Activated B cell treated with CpG ODN at 0.5 μM for 24 hours (primary cell): ENCODE measurements at regions of chr17 and their contacts with region 1.

Region 1: DNA sequence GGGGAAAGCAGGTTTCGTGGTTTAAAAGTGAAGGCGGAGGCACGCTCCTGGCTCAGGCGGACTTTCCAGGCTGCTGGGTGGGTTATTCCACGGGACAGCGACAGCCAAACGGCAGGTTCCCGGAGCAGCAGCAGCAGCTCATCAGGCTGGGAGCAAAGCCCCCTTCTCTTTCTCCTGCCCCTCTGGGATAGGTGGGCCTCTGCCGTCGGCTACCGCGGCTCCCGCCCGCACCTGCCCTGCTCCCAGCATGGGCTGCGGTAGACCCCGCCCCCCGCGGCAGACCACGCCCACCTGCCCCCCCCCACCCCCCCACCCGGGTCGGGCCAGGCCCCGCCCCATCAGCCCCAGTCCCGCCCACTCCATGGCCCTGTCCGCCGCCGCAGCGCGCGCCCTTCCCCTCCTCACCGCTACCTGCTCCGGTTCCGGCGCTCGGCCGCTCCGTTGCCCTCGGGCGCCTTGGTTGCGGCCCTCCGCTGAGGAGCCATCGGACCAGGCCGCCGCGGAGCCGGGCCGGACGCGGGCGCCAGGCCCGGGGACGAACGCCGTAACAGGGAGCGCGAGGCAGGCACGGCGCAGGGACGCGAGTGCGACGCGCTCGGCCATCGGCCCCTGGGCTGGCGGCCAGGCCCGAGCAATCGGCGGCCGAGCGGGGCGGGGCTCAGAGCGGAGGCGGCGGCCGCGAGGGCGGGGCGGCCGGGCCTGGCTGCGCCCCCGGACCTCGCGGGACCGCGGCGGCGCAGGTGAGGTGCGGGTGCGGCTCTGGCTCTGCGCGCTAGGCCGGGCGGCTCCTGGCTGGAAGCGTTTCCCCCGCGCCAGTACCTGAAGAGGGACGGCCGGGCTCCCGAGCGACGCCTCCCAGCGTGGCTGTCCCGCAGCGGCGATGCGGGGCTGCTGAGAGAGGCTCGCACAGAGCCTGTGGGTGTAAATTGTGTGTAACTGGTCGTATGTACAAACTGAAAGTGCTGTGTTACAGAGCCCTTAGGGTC is at the starts of genes HEXD and OGFOD3:
- DNase-seq: peak; percentile 95
- ATAC-seq: peak; percentile 87
- H3K4me3 Mint-ChIP-seq: peak within 1 kb of the TSS; percentile 83
- H3K27ac Mint-ChIP-seq: peak within 1 kb of the TSS; percentile 69
- H3K4me1 Mint-ChIP-seq: peaks cover 29% of the 10 kb centered on the region
- H3K27me3 Mint-ChIP-seq: no peaks in the 10 kb centered on the region
- CTCF ChIP-seq: no peak
- total RNA-seq, gene HEXD: 69.5 and 88.8 TPM in 2 replicates
- total RNA-seq, gene OGFOD3: 29.5 and 35.0 TPM in 2 replicates

Region 2: DNA sequence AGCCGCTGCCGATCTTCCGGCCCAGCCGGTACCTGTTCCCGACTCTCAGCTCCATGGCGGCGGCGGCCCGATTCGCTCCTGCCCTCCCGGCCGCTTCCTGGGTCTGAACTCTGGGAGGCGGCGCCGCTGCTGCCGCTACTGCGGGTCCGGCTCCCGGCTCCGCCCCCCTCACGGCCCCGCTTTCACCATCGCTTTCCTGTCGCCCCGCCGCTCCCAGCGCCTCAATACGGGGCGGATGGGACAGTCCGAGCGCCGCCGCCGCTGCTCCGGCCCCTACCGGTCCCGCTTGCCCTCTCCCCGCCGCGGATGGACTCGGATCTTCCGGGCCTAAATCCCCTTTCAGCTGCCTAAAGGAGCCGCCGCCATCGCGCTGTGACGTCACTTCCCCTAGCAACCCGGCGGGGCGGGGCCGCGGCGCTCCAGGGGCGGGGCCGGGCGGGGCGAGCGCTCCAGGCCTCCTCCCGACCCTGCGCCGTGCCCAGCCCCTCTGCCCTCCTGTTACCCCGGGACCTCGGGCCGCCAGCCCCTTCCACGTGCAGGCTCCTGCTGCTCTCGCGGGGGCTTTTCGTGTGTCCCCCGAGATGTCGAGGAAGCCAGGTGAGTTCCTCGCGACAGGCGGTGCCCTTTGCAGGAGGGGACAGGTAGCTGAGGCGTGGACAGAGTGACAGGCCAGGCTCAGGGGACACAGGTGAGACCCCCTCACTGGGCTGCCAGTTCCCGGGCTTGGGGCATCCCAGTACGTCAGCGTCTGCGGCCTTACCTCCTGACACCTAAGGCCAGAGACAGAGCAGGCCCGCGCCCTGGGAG is 144.8 kb before region 1 on chr17 and contains the start of gene CSNK1D:
- CTCF ChIA-PET with region 1: no interaction called
- POLR2A ChIA-PET with region 1: interaction called, 4 read pairs
- intact Hi-C with region 1: loop called (anchors 1 kb)
- DNase-seq: peak; percentile 97
- ATAC-seq: peak; percentile 83
- H3K4me3 Mint-ChIP-seq: peak within 1 kb of the TSS; percentile 94
- H3K27ac Mint-ChIP-seq: peak within 1 kb of the TSS; percentile 97
- H3K4me1 Mint-ChIP-seq: peaks cover 45% of the 10 kb centered on the region
- H3K27me3 Mint-ChIP-seq: no peaks in the 10 kb centered on the region
- CTCF ChIP-seq: no peak
- total RNA-seq, gene CSNK1D: 147 and 170 TPM in 2 replicates

Region 3: GRCh38 chr17:82351716-82352488 is 66.4 kb before region 1 on chr17:
- CTCF ChIA-PET with region 1: interaction called, 3 read pairs
- POLR2A ChIA-PET with region 1: interaction called, 3 read pairs
- intact Hi-C with region 1: loop called (anchors 1 kb)
- DNase-seq: peak; percentile 67
- ATAC-seq: peak; percentile 91
- H3K4me3 Mint-ChIP-seq: no peak overlapping the region
- H3K27ac Mint-ChIP-seq: no peak overlapping the region
- H3K4me1 Mint-ChIP-seq: peaks cover 9% of the 10 kb centered on the region
- H3K27me3 Mint-ChIP-seq: peaks cover 13% of the 10 kb centered on the region
- CTCF ChIP-seq: peak; percentile 70

Region 4: DNA sequence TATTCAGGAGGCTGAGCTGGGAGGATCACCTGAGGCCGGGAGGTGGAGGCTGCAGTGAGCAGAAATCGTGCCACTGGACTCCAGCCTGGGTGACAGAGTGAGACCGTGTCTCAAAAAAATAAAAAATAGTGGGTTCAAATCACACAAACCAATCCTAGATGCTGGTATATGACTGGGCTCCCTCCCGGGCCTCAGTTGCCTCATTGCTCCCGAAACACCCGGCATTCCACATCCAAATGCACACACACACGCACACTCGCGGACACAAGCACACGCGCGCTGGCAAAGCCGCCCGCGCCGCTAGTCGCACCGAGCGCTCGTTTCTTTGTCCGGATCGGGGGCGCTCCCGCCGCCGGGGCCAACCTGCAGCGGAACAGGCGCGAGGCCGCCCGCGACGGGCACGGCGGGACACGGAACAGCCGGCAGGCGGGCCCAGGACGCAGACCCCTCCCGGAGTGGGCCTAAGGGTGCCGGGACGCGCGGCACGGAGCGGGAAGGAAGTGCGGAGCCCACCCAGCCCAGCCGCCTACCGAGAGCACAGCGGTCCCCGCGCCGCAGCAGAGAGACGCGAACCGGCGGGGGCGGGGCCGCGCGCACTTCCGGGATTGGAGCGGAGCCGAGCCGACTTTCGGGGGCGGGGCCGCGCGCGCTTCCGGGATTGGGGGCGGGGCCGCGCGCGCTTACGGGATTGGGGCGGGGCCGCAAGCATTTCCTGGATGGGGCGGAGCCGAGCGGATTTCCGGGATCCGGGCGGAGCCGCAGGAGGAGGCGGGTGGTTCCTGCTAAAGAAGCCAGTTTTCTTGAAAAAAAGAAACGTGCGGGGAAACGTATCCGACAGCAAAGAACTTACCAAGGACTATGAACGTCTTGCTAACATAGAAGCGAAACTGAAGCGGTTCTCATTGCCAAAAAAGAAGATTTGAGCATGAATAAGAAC is 32.1 kb after region 1 on chr17 and contains the start of gene CYBC1:
- CTCF ChIA-PET with region 1: interaction called, 4 read pairs
- POLR2A ChIA-PET with region 1: interaction called, 62 read pairs
- intact Hi-C with region 1: loop called (anchors 1 kb)
- DNase-seq: peak; percentile 96
- ATAC-seq: peak; percentile 42
- H3K4me3 Mint-ChIP-seq: peak within 1 kb of the TSS; percentile 94
- H3K27ac Mint-ChIP-seq: peak within 1 kb of the TSS; percentile 97
- H3K4me1 Mint-ChIP-seq: peaks cover 42% of the 10 kb centered on the region
- H3K27me3 Mint-ChIP-seq: no peaks in the 10 kb centered on the region
- CTCF ChIP-seq: no peak
- total RNA-seq, gene CYBC1: 405 and 501 TPM in 2 replicates

Region 5: GRCh38 chr17:82494236-82495055 is 76.2 kb after region 1 on chr17:
- CTCF ChIA-PET with region 1: no interaction called
- POLR2A ChIA-PET with region 1: no interaction called
- intact Hi-C with region 1: loop called (anchors 1 kb)
- DNase-seq: peak; percentile 88
- ATAC-seq: peak; percentile 78
- H3K4me3 Mint-ChIP-seq: peak overlapping the region; percentile 75
- H3K27ac Mint-ChIP-seq: peak overlapping the region; percentile 93
- H3K4me1 Mint-ChIP-seq: peaks cover 26% of the 10 kb centered on the region
- H3K27me3 Mint-ChIP-seq: no peaks in the 10 kb centered on the region
- CTCF ChIP-seq: no peak

Region 6: DNA sequence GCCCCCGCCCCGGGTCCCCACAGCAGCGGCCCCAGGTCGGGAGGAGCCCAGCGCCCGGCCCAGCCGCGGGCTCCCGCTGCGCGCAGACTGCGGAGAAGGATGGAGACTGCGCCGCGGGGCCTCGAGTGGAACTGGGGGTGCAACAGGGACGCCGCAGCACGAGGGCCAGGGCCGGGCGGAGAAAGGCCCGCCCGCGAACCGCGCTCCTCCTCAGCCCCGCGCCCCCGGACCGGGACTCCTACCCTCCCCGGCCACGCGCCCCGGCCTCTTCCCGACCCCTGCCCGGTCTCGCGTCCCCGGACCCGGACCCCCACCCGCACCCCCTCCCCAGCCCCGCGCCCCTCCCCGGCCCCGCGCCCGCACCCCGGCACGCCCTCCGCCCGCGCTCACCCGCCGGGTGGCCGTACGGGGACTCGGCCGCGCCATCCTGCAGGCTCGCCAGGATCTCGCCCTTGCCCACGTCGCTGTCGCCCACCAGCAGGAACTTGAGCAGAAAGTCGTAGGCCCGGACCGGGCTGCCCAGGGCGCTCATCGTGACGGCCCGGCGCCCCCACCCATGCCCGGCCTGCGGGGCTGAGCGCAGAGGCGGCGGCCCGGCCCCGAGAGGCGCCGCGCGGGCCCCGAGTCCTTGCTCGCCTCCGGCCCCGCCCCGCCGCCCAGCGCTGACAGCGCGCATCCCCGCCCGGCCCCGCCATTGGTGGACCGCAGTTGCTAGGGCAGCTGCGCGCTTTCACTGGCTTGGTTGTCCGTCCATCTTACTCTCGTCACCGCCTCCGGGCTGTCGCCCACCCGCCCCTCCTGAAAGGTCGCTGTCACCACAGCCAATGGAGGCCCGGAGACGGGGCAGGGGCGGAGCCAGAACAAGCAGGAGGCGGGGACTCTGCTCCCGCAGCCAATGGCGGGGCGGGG is 280.0 kb after region 1 on chr17 and contains the start of gene RAB40B:
- CTCF ChIA-PET with region 1: no interaction called
- POLR2A ChIA-PET with region 1: no interaction called
- intact Hi-C with region 1: loop called (anchors 5 kb)
- DNase-seq: peak; percentile 94
- ATAC-seq: peak; percentile 98
- H3K4me3 Mint-ChIP-seq: peak within 1 kb of the TSS; percentile 82
- H3K27ac Mint-ChIP-seq: no peak within 1 kb of the TSS
- H3K4me1 Mint-ChIP-seq: peaks cover 16% of the 10 kb centered on the region
- H3K27me3 Mint-ChIP-seq: peaks cover 4% of the 10 kb centered on the region
- CTCF ChIP-seq: no peak
- total RNA-seq, gene RAB40B: 2.0 and 2.6 TPM in 2 replicates